ENCODE measurements at regions of chr10 and their contacts with region 1.

Region 1: GRCh38 chr10:18097524-18097923 is 42.7 kb upstream of the CACNB2 start:
- DNase-seq: no peak
- ATAC-seq: no peak
- H3K4me3 ChIP-seq: no peak overlapping the region
- H3K27ac ChIP-seq: no peak overlapping the region
- H3K4me1 ChIP-seq: peaks cover 0 to 4% (median 0%) of the 10 kb centered on the region in 9 donors
- H3K27me3 ChIP-seq: no peaks in the 10 kb centered on the region
- CTCF ChIP-seq: no peak

Region 2: DNA sequence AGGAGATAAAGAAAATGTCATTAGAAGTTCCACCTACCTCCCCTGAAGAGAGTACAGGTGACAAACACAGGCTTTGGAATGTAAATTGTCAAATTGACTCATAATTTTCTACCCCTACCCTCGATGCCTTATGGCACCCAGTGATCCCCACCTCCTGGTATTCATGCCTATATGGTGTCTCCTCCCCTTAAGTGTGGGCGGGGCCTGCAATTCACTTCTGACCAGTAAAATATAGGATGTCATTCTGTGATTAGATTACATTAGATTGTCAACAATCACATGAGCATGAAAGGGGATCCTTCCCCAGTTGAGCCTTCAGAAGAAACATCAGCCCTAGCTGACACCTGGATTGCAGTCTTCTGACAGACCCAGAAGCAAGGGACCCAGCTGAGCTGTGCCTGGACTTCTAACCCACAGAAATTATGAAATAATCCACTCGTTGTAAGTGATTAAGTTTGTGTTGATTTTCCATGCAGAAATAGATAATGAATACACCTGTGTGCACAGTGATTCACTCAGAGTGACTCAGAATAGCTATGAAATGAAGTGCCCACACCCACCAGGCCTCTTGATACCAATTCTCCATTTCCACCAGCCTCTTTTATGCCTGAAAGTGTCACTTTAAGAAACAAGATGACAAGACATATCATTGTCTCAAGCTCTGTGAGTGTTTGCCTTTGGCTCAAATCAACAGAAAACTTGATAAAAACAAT is 154.3 kb before region 1 on chr10:
- intact Hi-C with region 1: loop called in 1 of 10 experiments (anchors 10 kb)
- DNase-seq: no peak
- ATAC-seq: no peak
- H3K4me3 ChIP-seq: no peak overlapping the region
- H3K27ac ChIP-seq: no peak overlapping the region
- H3K4me1 ChIP-seq: no peaks in the 10 kb centered on the region
- H3K27me3 ChIP-seq: no peaks in the 10 kb centered on the region
- CTCF ChIP-seq: no peak

Region 3: GRCh38 chr10:18066947-18067346 is 30.6 kb before region 1 on chr10:
- intact Hi-C with region 1: no loop called
- DNase-seq: no peak
- ATAC-seq: no peak
- H3K4me3 ChIP-seq: no peak overlapping the region
- H3K27ac ChIP-seq: no peak overlapping the region
- H3K4me1 ChIP-seq: peaks cover 0 to 3% (median 0%) of the 10 kb centered on the region in 9 donors
- H3K27me3 ChIP-seq: no peaks in the 10 kb centered on the region
- CTCF ChIP-seq: no peak